MCF 10A (cell line): ENCODE measurements at regions of chr1 and their contacts with region 1.

Region 1: GRCh38 chr1:215444715-215445414 is 122.2 kb upstream of the KCTD3 start:
- DNase-seq: no peak
- H3K4me3 Mint-ChIP-seq: no peak overlapping the region
- H3K27ac Mint-ChIP-seq: no peak overlapping the region
- H3K4me1 Mint-ChIP-seq: peaks cover 3% of the 10 kb centered on the region
- H3K27me3 Mint-ChIP-seq: no peaks in the 10 kb centered on the region
- CTCF ChIP-seq: no peak

Region 2: GRCh38 chr1:215458104-215458503 is 13.2 kb after region 1 on chr1:
- CTCF ChIA-PET with region 1: interaction called, 5 read pairs
- POLR2A ChIA-PET with region 1: interaction called, 11 read pairs
- intact Hi-C with region 1: no loop called
- DNase-seq: no peak
- H3K4me3 Mint-ChIP-seq: no peak overlapping the region
- H3K27ac Mint-ChIP-seq: no peak overlapping the region
- H3K4me1 Mint-ChIP-seq: peaks cover 6% of the 10 kb centered on the region
- H3K27me3 Mint-ChIP-seq: no peaks in the 10 kb centered on the region
- CTCF ChIP-seq: no peak